K562 (cell line): ENCODE measurements at regions of chrX and their contacts with region 1.

Region 1: DNA sequence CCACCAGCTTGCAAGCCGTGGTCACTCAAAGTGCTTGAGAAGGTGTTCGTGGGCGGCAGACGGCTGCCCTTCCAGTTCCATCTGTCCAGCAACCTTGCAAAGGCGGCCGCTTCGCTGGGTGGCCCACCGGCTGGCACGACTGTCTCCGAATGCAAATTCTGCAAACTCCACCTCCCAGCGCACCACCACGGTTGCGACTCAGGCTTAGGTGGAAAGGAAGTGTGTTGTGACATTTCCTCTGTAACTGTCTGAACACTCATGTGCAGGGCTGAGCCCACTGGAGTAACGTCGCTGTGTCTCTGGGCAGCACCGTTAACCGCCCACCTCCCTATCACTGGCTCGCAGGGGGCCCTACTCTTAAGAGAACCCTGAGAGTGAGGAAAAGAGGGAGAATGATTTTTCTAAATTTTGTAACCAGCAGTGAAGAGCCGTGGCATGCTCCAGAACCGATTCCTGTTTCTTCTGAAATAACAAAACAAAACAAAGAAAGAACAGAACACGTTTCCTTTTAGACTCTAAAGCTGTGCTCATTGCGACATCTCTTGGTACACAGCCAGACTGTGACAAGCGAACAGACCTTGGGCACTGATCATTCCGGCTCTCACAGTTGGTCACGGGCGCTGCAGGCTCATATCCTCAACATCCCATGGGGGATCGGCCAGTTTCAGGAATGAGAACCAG is at the start of gene P2RY8:
- DNase-seq: peak in 1 of 4 experiments; percentile 12
- ATAC-seq: peak; percentile 67
- H3K4me3 ChIP-seq: no peak within 1 kb of the TSS
- H3K27ac ChIP-seq: no peak within 1 kb of the TSS
- H3K4me1 ChIP-seq: peaks cover 0 to 5% of the 10 kb centered on the region in 2 experiments; a peak in 2 of 5 replicates
- H3K27me3 ChIP-seq: no peaks in the 10 kb centered on the region
- CTCF ChIP-seq: peak in 1 of 3 experiments; percentile 32; a peak in 2 of 6 replicates
- EP300 ChIP-seq: no peak
- POLR2A ChIP-seq: no peak
- RAD21 ChIP-seq: peak; percentile 37 to 42
- polyA plus RNA-seq, gene P2RY8: not detected

Region 2: DNA sequence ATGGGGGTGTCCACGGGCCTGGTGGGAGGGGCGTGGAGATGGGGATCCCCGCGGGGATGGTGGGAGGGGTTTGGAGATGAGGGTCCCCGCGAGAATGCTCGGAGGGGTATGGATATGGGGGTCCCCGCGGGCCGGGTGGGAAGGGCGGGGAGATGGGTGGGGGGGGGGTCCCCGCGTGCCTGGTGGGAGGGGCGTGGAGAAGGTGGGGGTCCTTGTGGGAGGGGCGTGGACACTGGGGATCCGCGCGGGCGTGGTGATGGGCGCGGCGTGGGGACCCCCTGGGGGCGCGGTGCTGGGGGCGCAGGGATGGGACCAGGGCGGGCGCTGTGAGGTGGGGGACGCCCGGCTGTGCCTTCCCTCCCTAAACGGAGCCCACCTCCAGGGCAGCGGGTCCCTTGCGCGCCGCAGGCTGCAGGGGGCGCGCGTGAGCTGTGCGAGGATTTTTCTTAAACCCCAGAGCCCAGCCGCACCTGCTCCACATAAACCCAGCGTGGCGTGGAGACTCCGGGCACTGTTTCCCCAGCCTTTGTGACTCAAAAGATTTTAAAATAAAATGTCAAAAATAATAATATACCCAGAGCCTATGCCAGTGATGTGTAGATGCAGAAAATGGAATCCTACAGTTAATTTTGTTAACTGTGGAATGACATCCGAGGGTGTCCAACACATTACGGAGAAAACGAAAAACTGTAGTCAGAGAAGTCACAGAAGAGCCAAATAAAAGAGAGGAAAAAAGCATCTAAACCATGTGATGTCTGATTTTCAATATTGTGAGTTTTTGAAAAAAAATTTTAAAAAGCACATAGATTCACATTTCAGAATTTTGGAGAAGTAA is 83.0 kb before region 1 on chrX:
- CTCF ChIA-PET with region 1: no interaction called
- POLR2A ChIA-PET with region 1: no interaction called
- in situ Hi-C with region 1: no loop called
- intact Hi-C with region 1: loop called (anchors 5 kb)
- DNase-seq: peak; percentile 64 to 84 (median 67)
- ATAC-seq: peak; percentile 74
- H3K4me3 ChIP-seq: no peak overlapping the region
- H3K27ac ChIP-seq: no peak overlapping the region
- H3K4me1 ChIP-seq: peaks cover 0 to 13% of the 10 kb centered on the region in 2 experiments; a peak in 2 of 5 replicates
- H3K27me3 ChIP-seq: peaks cover 0 to 17% of the 10 kb centered on the region in 2 experiments; a peak in 2 of 5 replicates
- CTCF ChIP-seq: peak; percentile 74 to 85 (median 78)
- EP300 ChIP-seq: no peak
- POLR2A ChIP-seq: no peak
- RAD21 ChIP-seq: peak; percentile 84 to 86

Region 3: DNA sequence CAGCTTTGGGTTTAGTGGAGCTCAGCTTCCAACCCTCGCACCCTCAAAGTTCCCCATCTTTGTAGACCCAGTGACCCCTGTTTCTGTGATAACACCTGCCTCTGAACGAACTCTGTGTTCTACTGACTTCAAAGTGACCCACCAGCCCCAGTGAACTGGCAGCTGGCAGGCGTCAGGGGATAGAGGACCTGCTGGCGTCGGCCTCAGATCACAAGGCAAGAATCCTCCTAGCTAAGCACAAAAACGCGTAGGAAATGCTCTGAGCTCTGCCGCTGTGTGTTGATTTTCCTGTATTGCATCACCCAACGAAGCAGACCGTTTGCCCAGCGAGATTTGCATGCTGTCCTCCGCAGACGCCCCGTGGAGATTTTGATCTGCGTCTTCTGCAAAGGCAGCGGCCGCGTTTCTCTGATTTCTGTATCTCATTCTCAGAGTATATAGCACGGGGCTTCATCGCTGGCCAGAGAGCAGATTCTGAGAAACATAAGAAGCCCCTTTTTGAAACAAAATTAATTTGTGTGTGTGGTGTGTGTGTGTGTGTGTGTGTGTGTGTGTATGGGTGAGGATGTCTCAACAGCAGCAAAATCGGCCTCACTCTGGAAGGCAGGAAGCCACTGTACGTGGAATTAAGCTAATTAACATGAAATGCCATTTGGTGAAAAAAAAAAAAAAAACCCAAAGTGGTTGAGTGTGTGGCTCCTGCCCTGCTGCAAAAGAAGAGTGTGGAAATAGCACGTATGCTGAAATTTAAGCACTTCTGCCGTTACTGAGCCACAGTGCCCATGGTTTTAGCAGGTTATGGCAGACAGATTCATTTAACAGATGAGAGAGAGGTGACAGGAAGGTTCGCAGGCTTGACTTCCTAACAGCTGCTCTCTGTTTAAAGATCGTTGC is 55.3 kb before region 1 on chrX:
- CTCF ChIA-PET with region 1: no interaction called
- POLR2A ChIA-PET with region 1: no interaction called
- in situ Hi-C with region 1: loop called (anchors 5 kb)
- intact Hi-C with region 1: no loop called
- DNase-seq: peak in 3 of 4 experiments; percentile 15 to 74 (median 48)
- ATAC-seq: peak; percentile 93
- H3K4me3 ChIP-seq: no peak overlapping the region
- H3K27ac ChIP-seq: peak overlapping the region; percentile 79; the same call in 2 of the 3 replicates
- H3K4me1 ChIP-seq: peaks cover 17 to 20% of the 10 kb centered on the region in 2 experiments
- H3K27me3 ChIP-seq: no peaks in the 10 kb centered on the region
- CTCF ChIP-seq: no peak
- EP300 ChIP-seq: peak; percentile 97
- POLR2A ChIP-seq: no peak
- RAD21 ChIP-seq: peak in 1 of 2 experiments; percentile 22; a peak in 2 of 4 replicates